ENCODE measurements at regions of chrX and their contacts with region 1.

Region 1: DNA sequence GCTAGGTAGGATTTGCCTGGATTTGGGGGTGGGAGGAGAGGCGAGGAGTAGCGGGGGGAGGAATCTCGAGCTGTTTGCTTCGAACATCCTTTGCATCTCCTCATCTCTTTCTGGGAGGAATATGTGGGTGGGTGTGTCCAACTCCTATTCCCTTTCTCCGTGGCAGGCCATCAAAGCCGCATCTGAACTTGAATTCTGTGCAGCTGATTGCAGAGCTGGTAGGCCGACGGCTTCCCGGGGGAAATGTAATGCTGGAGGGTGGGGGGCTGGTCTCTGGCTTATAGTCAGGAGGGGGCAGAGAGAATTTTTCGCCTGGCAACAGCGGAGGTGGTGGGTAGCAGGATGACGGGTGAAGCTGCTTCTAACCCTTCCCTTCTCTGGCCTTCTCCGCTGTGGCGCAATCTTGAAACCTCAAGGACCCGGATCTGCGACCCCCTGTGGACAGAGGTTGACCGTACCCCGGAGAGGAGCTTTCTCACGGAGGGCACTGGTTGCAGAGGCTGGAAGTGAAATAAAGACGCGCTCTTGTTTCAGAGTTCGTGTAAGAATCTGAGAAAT is 628 bp downstream of the ZCCHC12 start:
- DNase-seq: peak in 1 of 2 experiments; percentile 5
- H3K4me3 ChIP-seq: peak overlapping the region; percentile 30
- H3K4me3 Mint-ChIP-seq: peak overlapping the region; percentile 83
- H3K27ac Mint-ChIP-seq: no peak overlapping the region
- H3K4me1 ChIP-seq: no peaks in the 10 kb centered on the region
- H3K4me1 Mint-ChIP-seq: no peaks in the 10 kb centered on the region
- H3K27me3 ChIP-seq: no peaks in the 10 kb centered on the region
- H3K27me3 Mint-ChIP-seq: peaks cover 19% of the 10 kb centered on the region
- CTCF ChIP-seq: no peak

Region 2: GRCh38 chrX:118627084-118627758 is 197.0 kb before region 1 on chrX:
- CTCF ChIA-PET with region 1: no interaction called
- POLR2A ChIA-PET with region 1: interaction called, 10 read pairs
- intact Hi-C with region 1: no loop called
- DNase-seq: peak in 1 of 2 experiments; percentile 5
- H3K4me3 ChIP-seq: no peak overlapping the region
- H3K4me3 Mint-ChIP-seq: no peak overlapping the region
- H3K27ac Mint-ChIP-seq: no peak overlapping the region
- H3K4me1 ChIP-seq: no peaks in the 10 kb centered on the region
- H3K4me1 Mint-ChIP-seq: no peaks in the 10 kb centered on the region
- H3K27me3 ChIP-seq: no peaks in the 10 kb centered on the region
- H3K27me3 Mint-ChIP-seq: no peaks in the 10 kb centered on the region
- CTCF ChIP-seq: peak; percentile 32 to 42

Measured in Caco-2 (cell line).